ENCODE measurements at regions of chr11 and their contacts with region 1.

Region 1: DNA sequence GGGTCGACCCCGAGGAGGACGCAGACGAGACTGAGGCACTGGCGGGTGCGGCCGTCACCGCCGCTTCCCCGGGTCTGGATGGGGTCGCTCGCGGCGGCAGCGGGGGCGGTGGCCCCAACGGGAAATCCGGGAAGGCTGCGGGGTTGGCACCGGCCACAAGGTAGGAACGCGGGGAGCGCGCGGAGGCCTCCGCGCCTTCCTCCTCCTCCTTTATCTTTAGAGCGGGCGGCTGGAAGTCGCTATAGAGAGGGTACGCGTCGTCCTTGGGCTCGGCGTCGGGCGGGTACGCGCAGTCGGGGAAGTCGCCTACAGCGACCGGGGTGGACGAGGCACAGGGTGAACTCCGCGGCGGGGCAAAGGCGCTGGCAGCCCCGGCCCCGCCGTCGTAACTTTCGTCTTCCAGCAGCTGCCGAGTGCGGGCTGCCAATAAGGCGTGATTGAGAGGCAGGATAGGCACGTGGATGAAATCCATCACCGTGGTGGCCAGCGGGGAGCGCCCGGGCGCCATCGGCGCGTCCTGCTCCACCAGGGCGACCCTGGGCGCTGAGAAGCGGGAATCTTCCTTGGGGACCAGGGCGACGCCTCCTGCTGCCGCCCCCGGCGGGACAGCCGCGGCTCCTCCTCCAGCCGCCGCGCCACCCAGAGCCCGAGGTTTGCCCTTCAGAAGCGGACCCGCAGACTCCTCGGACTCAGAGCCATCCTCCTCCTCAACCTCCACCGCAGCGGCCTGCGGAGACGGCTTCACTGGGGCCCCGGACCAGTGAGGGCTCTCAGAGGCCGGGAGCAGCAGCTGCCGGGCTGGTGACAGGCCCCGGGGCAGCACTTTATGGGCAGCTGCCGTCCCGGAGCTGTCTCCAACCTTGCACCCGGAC is 1.7 kb downstream of the PGR start:
- DNase-seq: peak; percentile 67
- ATAC-seq: peak; percentile 52

Region 2: DNA sequence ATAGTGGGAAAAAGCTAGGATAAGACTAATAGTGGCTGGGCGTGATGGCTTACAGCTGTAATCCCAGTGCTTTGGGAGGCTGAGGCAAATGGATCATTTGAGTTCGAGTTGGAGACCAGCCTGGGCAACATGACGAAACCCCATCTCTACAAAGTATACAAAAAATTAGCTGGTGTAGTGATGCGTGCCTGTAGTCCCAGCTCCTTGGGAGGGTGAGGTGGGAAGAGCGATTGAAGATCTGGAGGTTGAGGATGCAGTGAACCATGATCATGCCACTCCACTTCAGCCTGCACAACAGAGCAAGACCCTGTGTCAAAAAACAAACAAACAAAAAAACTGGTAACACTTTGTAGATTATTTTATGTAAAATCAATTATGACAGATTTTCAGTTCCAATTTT is 432.0 kb before region 1 on chr11:
- intact Hi-C with region 1: no loop called
- DNase-seq: no peak
- ATAC-seq: no peak

Region 3: DNA sequence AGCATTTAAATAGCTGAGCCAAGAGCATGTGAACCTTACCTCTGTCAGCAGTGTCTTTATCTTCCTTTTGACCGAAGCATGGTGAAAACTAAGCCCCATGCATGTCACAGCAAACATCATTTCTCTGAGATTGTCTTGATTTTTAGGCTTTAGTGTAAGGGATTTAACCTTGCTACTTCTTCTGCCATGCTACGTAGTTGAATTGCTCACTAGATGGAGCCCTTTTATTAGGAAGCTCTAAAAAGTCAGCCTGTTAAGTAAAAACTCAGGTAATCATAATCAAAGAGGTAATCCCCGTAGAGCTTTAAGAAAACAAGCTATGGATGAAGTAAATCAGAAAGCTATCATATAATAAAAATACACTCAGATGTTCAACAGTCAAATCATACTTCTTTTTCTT is 147.8 kb before region 1 on chr11:
- intact Hi-C with region 1: loop called (anchors 5 kb)
- DNase-seq: no peak
- ATAC-seq: no peak

Region 4: GRCh38 chr11:100994966-100995365 is 133.0 kb before region 1 on chr11:
- intact Hi-C with region 1: loop called (anchors 5 kb)
- DNase-seq: no peak
- ATAC-seq: no peak

Region 5: DNA sequence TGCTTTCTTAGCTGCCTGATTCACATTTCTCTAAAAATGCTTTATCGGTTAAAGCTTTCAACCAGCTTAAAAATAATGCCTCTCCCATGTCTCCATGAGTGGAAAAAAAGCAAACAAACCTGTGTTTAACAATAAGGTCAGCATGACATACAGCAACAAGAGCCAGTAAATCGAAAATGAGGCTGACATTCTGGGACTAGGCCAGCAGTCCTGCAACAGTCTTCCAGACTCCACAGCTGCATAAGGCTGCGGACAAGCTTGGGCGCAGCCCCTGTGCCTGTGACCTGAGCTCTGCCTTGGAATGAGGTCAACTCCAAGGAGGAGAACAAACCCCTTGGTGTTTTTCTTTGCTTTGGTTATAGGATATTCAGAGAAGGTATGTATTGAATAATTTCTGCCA is 93.9 kb before region 1 on chr11:
- intact Hi-C with region 1: loop called (anchors 2 kb)
- DNase-seq: peak; percentile 77
- ATAC-seq: peak; percentile 93

Region 6: DNA sequence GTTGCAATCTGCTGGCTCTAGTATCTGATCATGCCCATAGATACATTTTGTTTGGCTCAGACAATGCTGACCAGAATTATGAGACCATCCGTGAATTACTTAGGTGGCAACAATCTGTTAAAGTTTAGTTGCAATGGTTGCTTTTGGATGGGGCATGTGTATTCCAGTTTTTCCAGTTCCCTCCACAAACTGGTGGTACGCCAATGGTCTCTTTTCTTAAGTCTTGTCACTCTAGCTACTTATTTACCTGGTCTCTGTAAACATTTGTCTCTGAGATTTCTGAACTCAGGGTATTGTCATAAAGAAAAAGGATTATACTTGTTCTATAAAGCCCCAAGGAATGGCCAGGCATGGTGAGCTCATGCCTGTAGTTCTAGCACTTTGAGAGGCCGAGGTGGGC is 64.2 kb before region 1 on chr11:
- intact Hi-C with region 1: loop called (anchors 2 kb)
- DNase-seq: no peak
- ATAC-seq: no peak

Measured in Right ventricle myocardium inferior (tissue), 1 donor.